ENCODE measurements at regions of chr5 and their contacts with region 1.

Region 1: GRCh38 chr5:164832516-164832915 is 1327.1 kb downstream of the MAT2B start:
- DNase-seq: no peak
- ATAC-seq: no peak
- H3K4me3 ChIP-seq: no peak overlapping the region
- H3K4me3 Mint-ChIP-seq: no peak overlapping the region
- H3K27ac ChIP-seq: no peak overlapping the region
- H3K27ac Mint-ChIP-seq: no peak overlapping the region
- H3K4me1 ChIP-seq: no peaks in the 10 kb centered on the region
- H3K4me1 Mint-ChIP-seq: no peaks in the 10 kb centered on the region
- H3K27me3 ChIP-seq: no peaks in the 10 kb centered on the region
- H3K27me3 Mint-ChIP-seq: no peaks in the 10 kb centered on the region

Region 2: GRCh38 chr5:164470312-164470711 is 362.2 kb before region 1 on chr5:
- CTCF ChIA-PET with region 1: no interaction called
- POLR2A ChIA-PET with region 1: interaction called in 1 of 2 experiments, 12 read pairs
- DNase-seq: no peak
- ATAC-seq: no peak
- H3K4me3 ChIP-seq: no peak overlapping the region
- H3K4me3 Mint-ChIP-seq: no peak overlapping the region
- H3K27ac ChIP-seq: no peak overlapping the region
- H3K27ac Mint-ChIP-seq: no peak overlapping the region
- H3K4me1 ChIP-seq: no peaks in the 10 kb centered on the region
- H3K4me1 Mint-ChIP-seq: no peaks in the 10 kb centered on the region
- H3K27me3 ChIP-seq: no peaks in the 10 kb centered on the region
- H3K27me3 Mint-ChIP-seq: no peaks in the 10 kb centered on the region

Region 3: GRCh38 chr5:164996211-164996610 is 163.7 kb after region 1 on chr5:
- CTCF ChIA-PET with region 1: no interaction called
- POLR2A ChIA-PET with region 1: no interaction called
- DNase-seq: no peak
- ATAC-seq: no peak
- H3K4me3 ChIP-seq: no peak overlapping the region
- H3K4me3 Mint-ChIP-seq: no peak overlapping the region
- H3K27ac ChIP-seq: no peak overlapping the region
- H3K27ac Mint-ChIP-seq: no peak overlapping the region
- H3K4me1 ChIP-seq: no peaks in the 10 kb centered on the region
- H3K4me1 Mint-ChIP-seq: no peaks in the 10 kb centered on the region
- H3K27me3 ChIP-seq: no peaks in the 10 kb centered on the region
- H3K27me3 Mint-ChIP-seq: no peaks in the 10 kb centered on the region

Measured in T-cell (primary cell).